Activated CD4-positive, alpha-beta memory T cell treated with anti-CD3 and anti-CD28 coated beads for 36 hours (primary cell): ENCODE measurements at regions of chr2 and their contacts with region 1.

Region 1: GRCh38 chr2:230798769-230799399 is 65.9 kb upstream of the ITM2C start:
- DNase-seq: peak; percentile 36
- H3K4me3 Mint-ChIP-seq: no peak overlapping the region
- H3K27ac Mint-ChIP-seq: peak overlapping the region; percentile 64
- H3K4me1 Mint-ChIP-seq: peaks cover 16% of the 10 kb centered on the region
- H3K27me3 Mint-ChIP-seq: no peaks in the 10 kb centered on the region

Region 2: DNA sequence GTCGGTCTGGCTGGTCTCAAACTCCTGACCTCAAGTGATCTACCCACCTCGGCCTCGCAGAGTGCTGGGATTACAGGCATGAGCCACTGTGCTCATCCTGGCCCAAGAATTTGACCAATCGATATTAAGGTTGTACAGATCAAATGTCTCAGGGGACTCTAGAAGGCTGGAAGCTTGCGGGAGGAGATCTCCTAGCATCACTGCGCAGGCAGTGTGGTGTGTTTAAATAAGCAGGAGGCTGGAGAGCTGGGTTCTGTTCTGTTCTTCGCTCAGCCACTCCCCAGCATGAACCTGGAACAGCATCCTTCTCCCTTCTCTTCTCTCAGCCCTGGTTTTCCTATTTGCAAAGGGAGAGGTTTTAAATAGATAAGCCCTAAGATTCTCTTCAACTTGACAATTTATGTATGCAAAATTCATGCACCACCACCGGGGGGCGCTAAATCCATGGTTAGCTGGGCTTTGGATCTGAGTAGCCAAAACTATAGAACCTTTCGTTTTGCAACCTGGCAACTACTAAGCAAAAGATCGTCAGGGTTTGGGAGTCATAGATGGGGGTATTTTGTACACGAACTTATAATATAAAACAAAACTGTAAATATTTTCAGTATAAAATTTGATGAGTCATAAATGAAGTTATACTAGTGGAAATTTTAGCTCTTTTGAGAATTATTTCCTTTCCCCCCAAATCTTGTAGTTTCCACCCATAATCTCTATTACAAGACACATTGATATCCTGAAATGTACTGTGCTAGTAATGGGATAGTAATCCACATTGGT is 790.8 kb before region 1 on chr2:
- CTCF ChIA-PET with region 1: interaction called, 4 read pairs
- POLR2A ChIA-PET with region 1: no interaction called
- intact Hi-C with region 1: loop called (anchors 5 kb)
- DNase-seq: peak; percentile 90
- H3K4me3 Mint-ChIP-seq: no peak overlapping the region
- H3K27ac Mint-ChIP-seq: no peak overlapping the region
- H3K4me1 Mint-ChIP-seq: peaks cover 5% of the 10 kb centered on the region
- H3K27me3 Mint-ChIP-seq: no peaks in the 10 kb centered on the region

Region 3: GRCh38 chr2:230441227-230441897 is 357.5 kb before region 1 on chr2:
- CTCF ChIA-PET with region 1: no interaction called
- POLR2A ChIA-PET with region 1: no interaction called
- intact Hi-C with region 1: loop called (anchors 10 kb)
- DNase-seq: peak; percentile 71
- H3K4me3 Mint-ChIP-seq: peak overlapping the region; percentile 3
- H3K27ac Mint-ChIP-seq: peak overlapping the region; percentile 77
- H3K4me1 Mint-ChIP-seq: peaks cover 52% of the 10 kb centered on the region
- H3K27me3 Mint-ChIP-seq: no peaks in the 10 kb centered on the region

Region 4: DNA sequence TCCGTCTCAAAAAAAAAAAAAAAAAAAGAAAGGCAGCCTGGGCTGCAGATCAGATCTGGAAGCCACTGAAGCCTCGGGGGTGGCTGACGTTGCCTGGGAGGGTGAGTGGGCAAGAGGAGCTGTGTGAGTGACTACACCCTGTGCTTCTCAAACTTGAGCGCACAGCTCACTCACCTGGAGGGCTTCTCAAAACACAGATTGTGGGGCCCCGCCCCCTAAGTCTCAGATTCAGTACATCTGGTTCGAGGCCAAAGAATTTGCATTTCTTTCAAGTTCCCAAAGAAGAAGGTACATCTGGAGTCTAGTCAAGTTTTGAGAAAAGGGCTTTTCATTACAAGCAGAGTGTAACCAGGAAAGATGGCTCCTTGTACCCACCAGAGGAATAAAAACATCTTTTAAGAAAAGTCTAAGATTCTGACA is 184.0 kb before region 1 on chr2:
- CTCF ChIA-PET with region 1: interaction called, 15 read pairs
- POLR2A ChIA-PET with region 1: no interaction called
- intact Hi-C with region 1: loop called (anchors 2 kb)
- DNase-seq: peak; percentile 78
- H3K4me3 Mint-ChIP-seq: no peak overlapping the region
- H3K27ac Mint-ChIP-seq: peak overlapping the region; percentile 56
- H3K4me1 Mint-ChIP-seq: peaks cover 22% of the 10 kb centered on the region
- H3K27me3 Mint-ChIP-seq: no peaks in the 10 kb centered on the region

Region 5: DNA sequence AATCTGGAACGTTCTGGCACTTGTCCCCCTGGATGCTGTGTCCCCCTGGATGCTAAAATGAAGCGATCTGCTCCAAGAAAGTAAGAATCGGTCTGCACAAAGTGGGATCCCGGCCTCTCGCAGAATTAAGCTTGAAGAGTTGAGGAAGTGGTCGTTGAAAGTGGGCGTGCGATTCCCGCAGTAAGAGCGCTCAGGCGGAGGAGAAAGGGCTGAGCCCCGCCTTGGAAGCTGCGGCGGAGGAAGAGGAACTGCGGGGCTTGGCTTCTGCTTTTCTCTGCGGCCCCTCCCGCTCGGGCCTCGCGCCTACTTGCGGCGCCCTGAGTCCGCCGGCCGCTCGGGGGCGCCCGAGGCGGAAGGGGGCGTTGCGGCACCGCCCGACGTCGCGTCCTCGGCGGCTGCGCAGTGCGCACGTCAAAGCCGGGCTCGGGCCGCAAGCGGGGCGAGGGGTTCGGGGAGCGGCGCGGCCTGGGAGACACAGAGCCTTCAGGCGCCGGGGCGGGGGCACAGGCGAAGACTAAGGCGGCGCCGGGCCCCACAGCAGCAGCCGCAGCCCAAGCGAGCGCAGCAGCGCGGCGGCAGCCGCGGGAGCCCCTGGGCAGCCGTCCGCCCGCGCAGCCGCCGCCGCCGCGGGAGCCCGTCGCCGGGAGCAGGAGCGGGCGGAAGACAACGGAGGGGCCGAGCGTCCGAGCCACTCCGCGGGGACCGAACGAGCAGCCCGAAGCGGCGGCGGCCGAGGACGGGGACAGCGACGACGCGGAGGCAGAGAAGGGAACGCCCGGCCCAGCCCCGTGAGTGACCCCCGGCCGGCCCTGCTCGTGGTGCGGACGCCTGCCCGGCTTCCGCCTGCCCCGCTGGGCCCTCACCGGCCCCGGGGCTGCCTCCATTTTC is 86.2 kb before region 1 on chr2 and contains the start of gene CAB39:
- CTCF ChIA-PET with region 1: interaction called, 76 read pairs
- POLR2A ChIA-PET with region 1: interaction called, 22 read pairs
- intact Hi-C with region 1: loop called (anchors 1 kb)
- DNase-seq: peak; percentile 91
- H3K4me3 Mint-ChIP-seq: peak within 1 kb of the TSS; percentile 93
- H3K27ac Mint-ChIP-seq: peak within 1 kb of the TSS; percentile 91
- H3K4me1 Mint-ChIP-seq: peaks cover 41% of the 10 kb centered on the region
- H3K27me3 Mint-ChIP-seq: no peaks in the 10 kb centered on the region
- total RNA-seq, gene CAB39: 128 to 129 TPM

Region 6: GRCh38 chr2:230762317-230762896 is 36.5 kb before region 1 on chr2:
- CTCF ChIA-PET with region 1: interaction called, 13 read pairs
- POLR2A ChIA-PET with region 1: interaction called, 3 read pairs
- intact Hi-C with region 1: no loop called
- DNase-seq: peak; percentile 46
- H3K4me3 Mint-ChIP-seq: no peak overlapping the region
- H3K27ac Mint-ChIP-seq: no peak overlapping the region
- H3K4me1 Mint-ChIP-seq: peaks cover 69% of the 10 kb centered on the region
- H3K27me3 Mint-ChIP-seq: no peaks in the 10 kb centered on the region